ENCODE measurements at regions of chr12 and their contacts with region 1.

Region 1: GRCh38 chr12:122078141-122079032 is at the start of gene MLXIP:
- DNase-seq: peak; percentile 89
- ATAC-seq: peak; percentile 80
- H3K4me3 Mint-ChIP-seq: peak within 1 kb of the TSS; percentile 86
- H3K27ac Mint-ChIP-seq: peak within 1 kb of the TSS; percentile 74
- H3K4me1 Mint-ChIP-seq: peaks cover 66% of the 10 kb centered on the region
- H3K27me3 Mint-ChIP-seq: no peaks in the 10 kb centered on the region
- CTCF ChIP-seq: no peak
- total RNA-seq, gene MLXIP: 26.7 and 33.7 TPM in 2 replicates

Region 2: DNA sequence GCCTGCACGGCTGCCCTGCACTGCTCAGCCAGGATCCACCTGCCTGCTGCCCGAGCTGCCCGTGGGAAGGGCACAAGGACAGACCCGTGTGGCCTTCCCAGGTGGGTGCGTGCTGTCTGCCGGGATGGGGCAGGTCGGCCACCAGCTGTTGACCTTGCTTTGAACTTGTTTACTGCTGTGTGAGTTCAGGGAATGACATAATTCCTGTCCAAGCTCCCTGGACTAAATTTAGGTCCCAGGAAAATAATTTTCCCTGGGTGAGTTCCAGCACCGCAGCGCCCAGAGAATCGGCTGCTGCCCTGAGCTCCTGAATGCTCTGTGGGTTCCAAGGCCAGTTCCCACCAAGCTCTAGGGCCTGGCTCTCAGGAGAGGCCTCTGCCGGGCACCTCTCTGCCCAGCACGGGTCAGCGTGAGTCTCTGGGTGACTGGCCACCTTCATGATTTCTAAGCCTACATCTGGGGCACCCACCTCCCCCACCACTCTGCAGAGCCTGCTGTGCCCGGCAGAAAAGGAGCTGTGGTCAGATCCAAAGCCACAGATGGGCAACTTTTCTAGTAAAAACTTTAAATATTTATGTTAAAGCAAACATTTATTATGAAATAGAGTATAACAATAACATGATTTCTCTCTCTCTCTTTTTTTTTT is 27.0 kb before region 1 on chr12:
- CTCF ChIA-PET with region 1: interaction called, 13 read pairs
- POLR2A ChIA-PET with region 1: interaction called, 3 read pairs
- intact Hi-C with region 1: no loop called
- DNase-seq: no peak
- ATAC-seq: no peak
- H3K4me3 Mint-ChIP-seq: no peak overlapping the region
- H3K27ac Mint-ChIP-seq: no peak overlapping the region
- H3K4me1 Mint-ChIP-seq: peaks cover 4% of the 10 kb centered on the region
- H3K27me3 Mint-ChIP-seq: no peaks in the 10 kb centered on the region
- CTCF ChIP-seq: no peak

Region 3: GRCh38 chr12:122090759-122091515 is 12.6 kb after region 1 on chr12:
- CTCF ChIA-PET with region 1: interaction called, 3 read pairs
- POLR2A ChIA-PET with region 1: interaction called, 12 read pairs
- intact Hi-C with region 1: no loop called
- DNase-seq: no peak
- ATAC-seq: no peak
- H3K4me3 Mint-ChIP-seq: no peak overlapping the region
- H3K27ac Mint-ChIP-seq: no peak overlapping the region
- H3K4me1 Mint-ChIP-seq: peaks cover 45% of the 10 kb centered on the region
- H3K27me3 Mint-ChIP-seq: no peaks in the 10 kb centered on the region
- CTCF ChIP-seq: no peak

Region 4: DNA sequence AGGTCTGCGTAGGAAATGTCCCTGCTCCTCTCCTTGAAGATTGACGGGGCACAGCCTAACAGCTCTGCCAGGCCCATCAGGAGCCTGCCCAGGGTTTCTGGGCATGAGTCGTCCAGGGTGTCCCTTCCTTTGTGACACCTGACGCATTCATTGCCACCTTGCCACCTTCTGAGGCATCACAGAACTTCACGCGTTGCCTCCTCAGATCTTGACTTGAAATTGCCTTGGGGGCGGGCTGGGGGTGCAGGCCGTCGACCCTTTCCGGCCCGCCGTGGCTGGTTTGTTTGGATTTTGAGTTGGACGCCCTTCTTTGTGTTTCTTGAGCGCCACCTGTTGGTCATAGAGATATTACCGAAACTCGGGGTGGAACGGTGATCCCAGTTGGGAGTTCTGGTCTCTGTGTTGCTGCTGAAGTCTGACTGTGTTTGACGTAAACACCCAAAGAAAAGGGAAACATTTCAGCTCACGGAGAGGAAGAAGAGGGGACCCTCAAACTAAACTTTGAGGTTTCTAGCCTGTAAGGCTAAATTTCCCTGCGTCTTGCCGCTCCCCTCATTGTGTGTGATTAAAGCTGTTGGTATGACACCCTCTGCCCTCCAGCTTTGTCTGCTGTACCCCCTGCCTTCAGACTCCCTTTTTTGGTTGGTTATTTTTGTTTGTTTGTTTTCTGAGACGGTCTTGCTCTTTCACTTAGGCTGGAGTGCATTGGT is 44.8 kb after region 1 on chr12:
- CTCF ChIA-PET with region 1: interaction called, 10 read pairs
- POLR2A ChIA-PET with region 1: interaction called, 3 read pairs
- intact Hi-C with region 1: loop called (anchors 2 kb)
- DNase-seq: peak; percentile 50
- ATAC-seq: peak; percentile 62
- H3K4me3 Mint-ChIP-seq: no peak overlapping the region
- H3K27ac Mint-ChIP-seq: peak overlapping the region; percentile 38
- H3K4me1 Mint-ChIP-seq: peaks cover 23% of the 10 kb centered on the region
- H3K27me3 Mint-ChIP-seq: no peaks in the 10 kb centered on the region
- CTCF ChIP-seq: no peak